Panc1 (cell line): ENCODE measurements at regions of chr12 and their contacts with region 1.

Region 1: DNA sequence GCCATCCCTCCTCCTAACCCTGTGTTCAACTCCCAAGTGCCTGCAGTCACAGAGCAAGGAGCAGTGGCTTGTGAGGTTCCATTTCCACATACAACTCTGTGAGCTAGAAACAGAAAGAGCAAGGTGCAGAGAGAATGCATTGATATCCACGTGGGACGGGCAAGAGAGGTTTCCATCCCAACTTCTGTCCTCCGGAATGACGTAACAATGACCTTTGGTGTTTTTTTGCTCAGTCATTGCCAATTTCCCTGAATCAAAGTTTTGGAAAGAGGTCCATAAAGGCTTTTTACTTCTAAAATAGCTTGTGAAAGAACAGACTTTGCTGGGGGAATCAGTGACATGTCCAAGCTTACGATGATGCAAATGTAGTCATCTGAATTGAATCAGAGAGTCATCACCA is 387.5 kb upstream of the TMEM132C start:
- DNase-seq: no peak
- ATAC-seq: no peak
- H3K4me3 ChIP-seq: no peak overlapping the region
- H3K27ac ChIP-seq: no peak overlapping the region
- H3K4me1 ChIP-seq: no peaks in the 10 kb centered on the region
- H3K27me3 ChIP-seq: no peaks in the 10 kb centered on the region
- CTCF ChIP-seq: no peak

Region 2: GRCh38 chr12:127861406-127861805 is 18.1 kb before region 1 on chr12:
- CTCF ChIA-PET with region 1: no interaction called
- POLR2A ChIA-PET with region 1: interaction called, 11 read pairs
- in situ Hi-C with region 1: no loop called
- intact Hi-C with region 1: no loop called
- DNase-seq: no peak
- ATAC-seq: no peak
- H3K4me3 ChIP-seq: no peak overlapping the region
- H3K27ac ChIP-seq: no peak overlapping the region
- H3K4me1 ChIP-seq: no peaks in the 10 kb centered on the region
- H3K27me3 ChIP-seq: no peaks in the 10 kb centered on the region
- CTCF ChIP-seq: no peak